ENCODE measurements at regions of chr7 and their contacts with region 1.

Region 1: GRCh38 chr7:94223375-94224070 is 171.2 kb upstream of the COL1A2 start:
- DNase-seq: no peak
- ATAC-seq: peak; percentile 83
- H3K4me3 ChIP-seq: no peak overlapping the region
- H3K27ac ChIP-seq: no peak overlapping the region
- H3K4me1 ChIP-seq: no peaks in the 10 kb centered on the region
- H3K27me3 ChIP-seq: no peaks in the 10 kb centered on the region
- CTCF ChIP-seq: peak; percentile 20 to 55 (median 27); a peak in 3 of 6 replicates
- EP300 ChIP-seq: no peak
- POLR2A ChIP-seq: no peak
- RAD21 ChIP-seq: peak; percentile 67

Region 2: GRCh38 chr7:93799750-93800357 is 423.7 kb before region 1 on chr7:
- CTCF ChIA-PET with region 1: interaction called, 7 read pairs
- POLR2A ChIA-PET with region 1: no interaction called
- RAD21 ChIA-PET with region 1: interaction called, 5 read pairs
- SMC1A ChIA-PET with region 1: interaction called, 6 read pairs
- in situ Hi-C with region 1: no loop called
- intact Hi-C with region 1: loop called (anchors 5 kb)
- DNase-seq: no peak
- ATAC-seq: peak; percentile 54
- H3K4me3 ChIP-seq: no peak overlapping the region
- H3K27ac ChIP-seq: no peak overlapping the region
- H3K4me1 ChIP-seq: no peaks in the 10 kb centered on the region
- H3K27me3 ChIP-seq: no peaks in the 10 kb centered on the region
- CTCF ChIP-seq: peak; percentile 36 to 51 (median 41); a peak in 4 of 6 replicates
- EP300 ChIP-seq: no peak
- POLR2A ChIP-seq: no peak
- RAD21 ChIP-seq: peak; percentile 56

Region 3: DNA sequence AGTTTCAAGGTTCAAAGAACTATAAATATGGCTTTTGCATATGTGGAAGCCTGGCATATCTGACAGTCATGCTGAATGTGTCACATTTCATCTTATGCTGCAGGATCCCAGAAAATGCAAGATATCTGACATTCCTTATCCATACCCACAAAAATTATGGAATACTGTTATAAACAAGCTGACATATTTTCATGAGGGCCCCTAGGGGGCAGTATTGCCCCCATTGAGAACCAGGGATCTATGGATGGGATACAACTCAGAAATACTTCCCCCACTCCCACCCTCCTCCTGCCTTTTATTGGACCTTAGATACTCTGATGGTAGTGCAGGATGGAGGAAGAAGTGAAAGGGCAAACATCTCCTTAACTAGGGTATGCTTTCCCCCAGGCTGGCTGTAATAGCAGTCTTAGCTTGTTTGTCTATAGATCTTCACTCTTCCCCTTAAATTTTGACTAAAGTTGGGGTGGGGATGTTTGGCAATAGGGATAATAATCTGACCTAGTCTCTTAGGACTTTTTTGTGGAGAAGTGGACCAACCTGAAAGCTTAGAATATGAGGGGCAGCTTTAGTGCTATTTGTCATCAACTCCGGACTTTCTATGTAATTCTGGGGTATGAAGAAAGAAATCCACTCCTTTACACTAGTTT is 320.6 kb before region 1 on chr7:
- CTCF ChIA-PET with region 1: interaction called, 11 read pairs
- POLR2A ChIA-PET with region 1: no interaction called
- RAD21 ChIA-PET with region 1: interaction called, 9 read pairs
- SMC1A ChIA-PET with region 1: interaction called, 13 read pairs
- in situ Hi-C with region 1: no loop called
- intact Hi-C with region 1: loop called (anchors 5 kb)
- DNase-seq: no peak
- ATAC-seq: peak; percentile 56
- H3K4me3 ChIP-seq: no peak overlapping the region
- H3K27ac ChIP-seq: no peak overlapping the region
- H3K4me1 ChIP-seq: no peaks in the 10 kb centered on the region
- H3K27me3 ChIP-seq: no peaks in the 10 kb centered on the region
- CTCF ChIP-seq: peak; percentile 66 to 72 (median 69)
- EP300 ChIP-seq: no peak
- POLR2A ChIP-seq: no peak
- RAD21 ChIP-seq: peak; percentile 86

Region 4: DNA sequence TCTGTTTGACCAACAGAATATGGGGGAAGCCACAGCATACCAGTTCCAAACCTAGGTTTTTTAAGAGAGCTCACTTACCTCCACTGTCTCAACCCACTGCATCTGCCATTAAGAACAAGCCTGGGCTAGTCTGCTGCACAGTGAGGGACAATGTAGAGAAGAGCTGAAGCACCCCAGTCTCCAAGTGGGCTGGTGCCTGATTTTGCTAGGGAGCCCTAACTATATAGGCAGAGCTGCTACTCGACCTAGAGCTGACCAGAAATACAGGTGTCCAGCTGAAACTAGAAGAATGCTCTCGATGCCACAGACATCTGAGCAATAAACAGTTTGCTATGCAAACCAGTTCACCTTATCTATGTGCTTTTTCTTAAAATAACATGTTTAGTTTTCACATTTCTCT is 112.5 kb before region 1 on chr7:
- CTCF ChIA-PET with region 1: interaction called, 12 read pairs
- POLR2A ChIA-PET with region 1: no interaction called
- RAD21 ChIA-PET with region 1: no interaction called
- SMC1A ChIA-PET with region 1: no interaction called
- in situ Hi-C with region 1: no loop called
- intact Hi-C with region 1: no loop called
- DNase-seq: no peak
- ATAC-seq: peak; percentile 65
- H3K4me3 ChIP-seq: no peak overlapping the region
- H3K27ac ChIP-seq: no peak overlapping the region
- H3K4me1 ChIP-seq: no peaks in the 10 kb centered on the region
- H3K27me3 ChIP-seq: no peaks in the 10 kb centered on the region
- CTCF ChIP-seq: no peak
- EP300 ChIP-seq: no peak
- POLR2A ChIP-seq: no peak
- RAD21 ChIP-seq: no peak

Region 5: GRCh38 chr7:94154858-94155257 is 68.7 kb before region 1 on chr7:
- CTCF ChIA-PET with region 1: interaction called, 3 read pairs
- POLR2A ChIA-PET with region 1: no interaction called
- RAD21 ChIA-PET with region 1: interaction called, 9 read pairs
- SMC1A ChIA-PET with region 1: interaction called, 11 read pairs
- in situ Hi-C with region 1: no loop called
- intact Hi-C with region 1: no loop called
- DNase-seq: no peak
- ATAC-seq: peak; percentile 78
- H3K4me3 ChIP-seq: no peak overlapping the region
- H3K27ac ChIP-seq: no peak overlapping the region
- H3K4me1 ChIP-seq: no peaks in the 10 kb centered on the region
- H3K27me3 ChIP-seq: no peaks in the 10 kb centered on the region
- CTCF ChIP-seq: peak in 1 of 3 experiments; percentile 27; a peak in 1 of 6 replicates
- EP300 ChIP-seq: no peak
- POLR2A ChIP-seq: no peak
- RAD21 ChIP-seq: peak; percentile 27; the same call in 1 of the 2 replicates

Measured in GM12878 (cell line).